K562 (cell line): ENCODE measurements at regions of chr1 and their contacts with region 1.

Region 1: DNA sequence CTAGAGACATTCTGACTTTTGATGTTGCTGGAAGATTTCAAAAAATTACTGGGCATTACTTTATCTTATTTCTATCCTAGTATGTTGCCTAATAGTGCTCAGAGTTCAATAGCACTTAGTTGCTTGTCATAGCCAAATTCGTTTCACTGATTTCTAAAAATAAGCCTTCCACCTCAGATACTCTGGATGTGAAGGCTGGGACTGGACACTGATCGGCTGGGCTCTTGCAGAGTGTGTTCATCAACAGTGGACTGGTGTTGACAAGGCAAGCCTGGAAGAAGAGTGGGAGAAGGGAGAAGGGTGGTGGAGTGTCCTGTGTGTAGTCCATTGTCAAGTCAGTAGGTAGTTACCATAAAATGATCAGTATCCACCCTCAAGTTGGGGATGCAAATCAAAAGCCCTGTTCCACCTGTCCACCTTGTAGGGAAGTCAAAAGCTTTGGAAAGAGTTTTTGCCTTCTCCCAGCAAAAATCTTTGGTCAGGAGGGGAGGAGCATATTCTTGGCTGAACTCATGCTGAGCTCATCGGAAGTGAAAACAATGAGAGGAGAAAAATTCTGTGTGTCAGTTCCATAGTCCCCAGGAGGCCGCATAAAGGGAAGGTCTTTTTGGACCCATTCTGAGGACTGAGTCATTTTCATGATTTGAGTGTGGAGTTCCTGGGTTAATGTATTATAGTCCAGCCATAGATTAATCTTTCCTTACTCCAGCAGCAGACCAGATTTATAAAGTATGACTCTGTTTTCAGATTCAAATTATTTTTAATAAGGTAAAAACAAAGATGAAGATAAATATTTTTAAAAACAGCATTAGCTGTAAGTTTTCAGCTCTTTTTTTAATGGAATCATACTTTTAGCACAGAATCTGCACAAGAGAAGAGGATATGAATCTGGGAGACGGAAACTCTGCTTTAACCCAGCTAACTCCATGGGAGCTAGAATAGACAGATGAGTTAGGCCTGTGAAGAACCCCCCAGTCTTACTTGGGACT is 99.5 kb upstream of the BMP8A start:
- DNase-seq: peak in 3 of 4 experiments; percentile 27 to 82 (median 78)
- ATAC-seq: peak; percentile 81
- H3K4me3 ChIP-seq: no peak overlapping the region
- H3K27ac ChIP-seq: peak overlapping the region; percentile 81
- H3K4me1 ChIP-seq: peaks cover 32 to 78% of the 10 kb centered on the region in 2 experiments
- H3K27me3 ChIP-seq: no peaks in the 10 kb centered on the region
- CTCF ChIP-seq: no peak
- EP300 ChIP-seq: peak; percentile 37
- POLR2A ChIP-seq: peak; percentile 41
- RAD21 ChIP-seq: no peak; a peak in 1 of 4 replicates

Region 2: DNA sequence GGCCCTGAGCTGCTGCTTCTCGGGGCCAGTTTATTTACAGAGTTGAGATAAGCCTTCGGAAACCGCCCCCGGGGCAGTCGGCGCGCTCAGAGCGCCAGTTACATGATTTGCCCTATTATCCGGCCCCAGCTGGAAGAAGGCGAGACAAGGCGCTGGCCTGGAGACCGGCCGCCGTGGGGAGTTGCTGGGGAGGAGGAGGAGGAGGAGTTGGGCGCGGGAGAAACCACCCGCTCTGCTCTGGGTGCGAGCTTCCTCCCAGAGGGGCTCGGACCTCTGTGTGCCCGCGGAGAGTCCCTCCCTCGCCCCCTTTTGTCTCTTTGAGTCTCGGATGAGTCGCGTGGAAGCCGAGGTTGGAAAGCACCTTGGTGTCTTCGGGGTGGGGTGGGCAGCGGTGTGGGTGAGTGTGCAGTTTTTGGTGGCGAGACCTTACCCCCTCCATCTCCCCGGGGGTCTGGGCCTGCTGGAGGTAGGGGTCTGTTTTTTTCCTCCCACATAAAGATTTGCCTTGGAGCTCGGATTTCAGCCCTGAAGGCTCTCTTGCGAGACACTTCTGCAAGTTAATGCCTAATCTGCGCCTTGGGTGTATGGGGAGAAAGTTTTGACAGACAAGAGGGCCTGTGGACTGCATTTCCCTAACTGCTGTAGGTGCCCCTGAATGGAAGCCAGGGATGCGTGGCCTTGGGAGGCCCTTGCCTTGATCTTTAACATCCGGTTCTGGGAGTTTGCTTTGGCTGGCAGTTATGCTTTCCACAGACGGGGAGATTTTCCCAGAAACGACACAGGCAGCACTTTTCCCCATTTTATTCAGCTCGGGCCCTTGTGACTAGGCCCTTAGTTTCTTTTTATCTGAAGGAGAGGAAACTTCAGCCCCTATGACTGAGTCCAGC is 285.9 kb before region 1 on chr1:
- CTCF ChIA-PET with region 1: no interaction called
- POLR2A ChIA-PET with region 1: no interaction called
- in situ Hi-C with region 1: no loop called
- intact Hi-C with region 1: loop called (anchors 2 kb)
- DNase-seq: peak in 3 of 4 experiments; percentile 71 to 75 (median 73)
- ATAC-seq: peak; percentile 54
- H3K4me3 ChIP-seq: peak overlapping the region; percentile 53
- H3K27ac ChIP-seq: peak overlapping the region; percentile 52
- H3K4me1 ChIP-seq: peaks cover 22 to 49% of the 10 kb centered on the region in 2 experiments
- H3K27me3 ChIP-seq: no peaks in the 10 kb centered on the region
- CTCF ChIP-seq: no peak
- EP300 ChIP-seq: no peak
- POLR2A ChIP-seq: no peak
- RAD21 ChIP-seq: no peak; a peak in 1 of 4 replicates

Region 3: GRCh38 chr1:39268112-39268581 is 123.8 kb before region 1 on chr1:
- CTCF ChIA-PET with region 1: no interaction called
- POLR2A ChIA-PET with region 1: interaction called, 4 read pairs
- in situ Hi-C with region 1: no loop called
- intact Hi-C with region 1: loop called (anchors 1 kb)
- DNase-seq: no peak
- ATAC-seq: no peak
- H3K4me3 ChIP-seq: no peak overlapping the region
- H3K27ac ChIP-seq: no peak overlapping the region
- H3K4me1 ChIP-seq: peaks cover 15 to 34% of the 10 kb centered on the region in 2 experiments
- H3K27me3 ChIP-seq: no peaks in the 10 kb centered on the region
- CTCF ChIP-seq: no peak
- EP300 ChIP-seq: no peak
- POLR2A ChIP-seq: no peak
- RAD21 ChIP-seq: no peak

Region 4: GRCh38 chr1:39485046-39485803 is 93.2 kb after region 1 on chr1:
- CTCF ChIA-PET with region 1: no interaction called
- POLR2A ChIA-PET with region 1: no interaction called
- in situ Hi-C with region 1: no loop called
- intact Hi-C with region 1: no loop called
- DNase-seq: no peak
- ATAC-seq: no peak
- H3K4me3 ChIP-seq: no peak overlapping the region
- H3K27ac ChIP-seq: no peak overlapping the region
- H3K4me1 ChIP-seq: peaks cover 0 to 3% of the 10 kb centered on the region in 2 experiments; a peak in 1 of 5 replicates
- H3K27me3 ChIP-seq: no peaks in the 10 kb centered on the region
- CTCF ChIP-seq: no peak
- EP300 ChIP-seq: no peak
- POLR2A ChIP-seq: no peak
- RAD21 ChIP-seq: no peak